ENCODE measurements at regions of chr9 and their contacts with region 1.

Region 1: GRCh38 chr9:106174331-106174730 is 480.0 kb downstream of the TMEM38B start:
- DNase-seq: no peak
- ATAC-seq: no peak
- H3K4me3 ChIP-seq: no peak overlapping the region
- H3K27ac ChIP-seq: no peak overlapping the region
- H3K4me1 ChIP-seq: no peaks in the 10 kb centered on the region
- H3K27me3 ChIP-seq: no peaks in the 10 kb centered on the region
- CTCF ChIP-seq: no peak
- POLR2A ChIP-seq: no peak

Region 2: GRCh38 chr9:105984714-105985113 is 189.6 kb before region 1 on chr9:
- intact Hi-C with region 1: loop called in 1 of 10 experiments (anchors 5 kb)
- DNase-seq: no peak
- ATAC-seq: no peak
- H3K4me3 ChIP-seq: no peak overlapping the region
- H3K27ac ChIP-seq: no peak overlapping the region
- H3K4me1 ChIP-seq: no peaks in the 10 kb centered on the region
- H3K27me3 ChIP-seq: no peaks in the 10 kb centered on the region
- CTCF ChIP-seq: no peak
- POLR2A ChIP-seq: no peak

Measured in heart left ventricle (tissue), 16 donors.